Activated naive CD4-positive, alpha-beta T cell treated with anti-CD3 and anti-CD28 coated beads for 36 hours (primary cell): ENCODE measurements at regions of chr12 and their contacts with region 1.

Region 1: DNA sequence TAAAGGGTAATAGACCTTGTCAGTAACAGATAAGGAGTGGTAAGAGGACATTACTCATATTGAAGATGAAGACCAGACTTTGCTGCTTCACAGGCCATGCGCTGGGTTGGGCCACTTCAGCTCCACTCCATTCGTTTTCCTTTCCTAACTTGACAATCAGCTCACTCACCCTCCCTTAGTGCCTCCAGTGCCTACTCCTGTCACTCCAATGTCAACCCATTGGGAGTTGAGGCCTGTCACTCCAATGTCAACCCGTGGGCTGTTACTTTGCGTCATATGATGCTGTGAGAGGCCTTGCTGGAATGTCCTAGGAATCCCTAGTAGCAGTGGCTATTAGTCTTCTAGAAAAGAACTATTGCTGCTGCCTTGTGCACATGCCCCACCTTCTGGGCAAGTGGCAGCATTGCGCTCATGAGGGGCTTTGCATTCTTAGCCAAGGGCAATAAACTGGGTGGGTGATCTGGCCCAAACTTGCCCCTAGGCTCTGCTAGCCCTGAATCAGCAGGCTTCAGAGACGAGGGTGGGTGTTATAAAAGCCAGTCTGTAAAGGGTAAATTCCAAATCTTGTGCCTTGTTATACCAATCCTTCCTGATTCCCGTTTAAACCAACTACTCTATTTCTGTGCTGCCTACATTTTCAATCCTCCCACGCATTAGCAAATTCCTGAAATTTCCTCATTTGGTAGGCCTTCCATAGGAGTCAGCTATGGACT is 36.1 kb downstream of the BAZ2A start:
- DNase-seq: peak; percentile 74
- H3K4me3 Mint-ChIP-seq: no peak overlapping the region
- H3K27ac Mint-ChIP-seq: no peak overlapping the region
- H3K4me1 Mint-ChIP-seq: no peaks in the 10 kb centered on the region
- H3K27me3 Mint-ChIP-seq: no peaks in the 10 kb centered on the region

Region 2: DNA sequence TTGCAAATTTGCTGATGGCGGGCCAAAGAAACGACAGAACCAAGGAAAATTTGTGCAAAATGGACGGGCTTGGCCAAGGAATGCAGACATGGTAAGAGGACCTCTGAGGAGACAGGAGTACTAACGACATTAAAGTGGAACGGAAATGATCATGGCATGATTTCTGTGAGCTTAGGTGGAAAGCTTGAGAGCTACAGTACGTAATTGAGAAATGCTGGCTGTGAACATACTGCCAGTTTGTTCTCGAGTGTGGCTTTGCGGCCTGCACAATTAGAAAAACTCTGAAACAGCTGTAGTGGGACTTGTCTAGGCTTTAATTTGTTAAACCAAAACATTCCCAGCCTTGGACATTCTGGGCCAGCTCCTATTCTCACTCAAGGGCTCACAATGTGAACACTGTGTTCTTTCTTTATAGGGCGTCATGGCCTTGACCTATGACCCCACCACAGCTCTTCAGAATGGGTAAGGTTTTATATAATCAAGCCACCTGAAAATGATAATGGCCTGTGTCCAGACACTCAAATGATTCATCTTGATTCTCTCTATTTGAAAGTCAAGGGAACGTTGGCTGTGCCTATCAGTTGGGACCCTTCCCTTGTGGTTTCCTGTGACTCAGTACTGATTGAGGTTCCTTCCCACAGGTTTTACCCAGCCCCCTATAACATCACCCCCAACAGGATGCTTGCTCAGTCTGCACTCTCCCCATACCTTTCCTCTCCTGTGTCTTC is 12.5 kb before region 1 on chr12:
- CTCF ChIA-PET with region 1: interaction called, 13 read pairs
- intact Hi-C with region 1: no loop called
- DNase-seq: peak; percentile 33
- H3K4me3 Mint-ChIP-seq: no peak overlapping the region
- H3K27ac Mint-ChIP-seq: no peak overlapping the region
- H3K4me1 Mint-ChIP-seq: peaks cover 19% of the 10 kb centered on the region
- H3K27me3 Mint-ChIP-seq: no peaks in the 10 kb centered on the region